Activated naive CD4-positive, alpha-beta T cell treated with anti-CD3 and anti-CD28 coated beads for 36 hours (primary cell): ENCODE measurements at regions of chr11 and their contacts with region 1.

Region 1: DNA sequence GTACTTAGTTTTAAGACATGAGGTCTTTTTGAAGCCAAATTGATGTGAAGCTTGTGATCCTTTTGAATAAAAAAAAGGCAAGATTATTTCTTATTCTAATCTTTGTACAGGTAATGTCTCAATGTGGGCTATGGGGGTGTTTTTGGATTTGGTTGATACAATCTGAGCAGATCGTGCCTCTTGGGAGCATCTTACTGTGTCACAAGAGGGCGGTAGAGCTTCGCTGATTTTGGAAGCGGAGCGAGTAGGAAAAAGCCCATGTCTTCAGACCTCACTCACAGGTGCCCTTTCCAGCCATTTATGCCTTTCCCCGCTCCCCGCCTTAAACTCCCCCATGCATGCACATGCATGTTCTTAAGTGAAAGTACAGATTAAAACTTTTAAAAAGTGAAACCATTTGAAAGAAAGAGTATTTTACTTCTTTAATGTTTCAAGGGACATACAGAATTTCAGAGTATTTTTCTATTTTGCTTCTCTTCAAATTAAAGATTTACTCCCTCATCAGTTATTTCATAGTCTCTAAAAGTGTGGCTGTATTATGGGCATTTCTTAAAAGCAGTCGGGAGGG is 18.8 kb downstream of the DDX25 start:
- DNase-seq: peak; percentile 75
- H3K4me3 Mint-ChIP-seq: no peak overlapping the region
- H3K27ac Mint-ChIP-seq: no peak overlapping the region
- H3K4me1 Mint-ChIP-seq: no peaks in the 10 kb centered on the region
- H3K27me3 Mint-ChIP-seq: peaks cover 9% of the 10 kb centered on the region

Region 2: GRCh38 chr11:125720781-125721180 is 202.3 kb before region 1 on chr11:
- CTCF ChIA-PET with region 1: no interaction called
- intact Hi-C with region 1: no loop called
- DNase-seq: no peak
- H3K4me3 Mint-ChIP-seq: no peak overlapping the region
- H3K27ac Mint-ChIP-seq: no peak overlapping the region
- H3K4me1 Mint-ChIP-seq: no peaks in the 10 kb centered on the region
- H3K27me3 Mint-ChIP-seq: peaks cover 8% of the 10 kb centered on the region

Region 3: DNA sequence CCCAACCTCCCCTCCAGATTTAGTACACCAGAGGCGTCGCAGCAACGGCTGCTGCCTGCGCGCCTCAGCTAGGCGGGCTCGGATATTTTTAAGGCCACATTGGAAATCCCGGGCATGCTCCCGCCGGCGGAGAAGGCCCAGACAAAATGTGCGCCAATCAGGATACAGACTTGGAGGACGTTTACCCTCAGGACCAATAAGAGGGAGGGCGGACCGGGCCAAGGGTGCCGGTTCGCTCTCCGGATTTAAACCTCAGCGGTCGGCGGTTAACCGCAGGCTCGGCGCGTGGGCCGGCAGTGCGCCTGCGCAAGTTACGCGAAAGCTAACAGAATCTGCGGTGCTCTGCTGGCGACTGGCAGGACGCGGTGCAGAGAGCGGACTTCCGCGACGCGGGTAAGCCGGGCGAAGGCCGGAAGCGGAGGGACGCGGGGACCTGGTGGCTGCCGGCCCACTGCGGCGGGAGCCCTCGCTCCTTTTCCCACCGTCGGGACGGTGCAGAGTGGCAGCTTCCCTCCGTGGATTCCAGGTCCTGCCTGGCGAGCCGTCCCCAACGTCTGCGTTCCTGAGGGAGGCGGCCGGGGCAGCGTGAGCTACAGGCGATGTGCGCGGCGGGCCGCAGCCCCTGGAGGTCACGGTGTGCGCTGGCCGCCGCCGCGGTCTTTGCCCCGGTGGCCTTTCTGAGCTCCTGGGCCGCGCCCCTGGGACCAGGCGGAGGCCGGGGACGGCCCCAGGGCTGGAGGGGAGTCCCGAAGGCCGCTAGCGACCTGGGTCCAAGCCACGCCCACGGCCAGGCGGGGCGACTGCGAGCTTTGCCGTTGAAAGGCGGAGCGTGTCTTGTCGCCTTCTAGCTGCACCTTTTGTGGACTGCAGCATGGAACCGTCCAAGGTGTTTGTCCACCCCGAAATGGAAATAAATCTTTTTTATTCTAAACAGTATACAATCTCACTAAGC is 35.4 kb before region 1 on chr11 and contains the start of gene HYLS1:
- CTCF ChIA-PET with region 1: no interaction called
- intact Hi-C with region 1: no loop called
- DNase-seq: peak; percentile 97
- H3K4me3 Mint-ChIP-seq: peak within 1 kb of the TSS; percentile 81
- H3K27ac Mint-ChIP-seq: peak within 1 kb of the TSS; percentile 88
- H3K4me1 Mint-ChIP-seq: peaks cover 35% of the 10 kb centered on the region
- H3K27me3 Mint-ChIP-seq: no peaks in the 10 kb centered on the region
- total RNA-seq, gene HYLS1: 10.2 to 11.7 TPM

Region 4: DNA sequence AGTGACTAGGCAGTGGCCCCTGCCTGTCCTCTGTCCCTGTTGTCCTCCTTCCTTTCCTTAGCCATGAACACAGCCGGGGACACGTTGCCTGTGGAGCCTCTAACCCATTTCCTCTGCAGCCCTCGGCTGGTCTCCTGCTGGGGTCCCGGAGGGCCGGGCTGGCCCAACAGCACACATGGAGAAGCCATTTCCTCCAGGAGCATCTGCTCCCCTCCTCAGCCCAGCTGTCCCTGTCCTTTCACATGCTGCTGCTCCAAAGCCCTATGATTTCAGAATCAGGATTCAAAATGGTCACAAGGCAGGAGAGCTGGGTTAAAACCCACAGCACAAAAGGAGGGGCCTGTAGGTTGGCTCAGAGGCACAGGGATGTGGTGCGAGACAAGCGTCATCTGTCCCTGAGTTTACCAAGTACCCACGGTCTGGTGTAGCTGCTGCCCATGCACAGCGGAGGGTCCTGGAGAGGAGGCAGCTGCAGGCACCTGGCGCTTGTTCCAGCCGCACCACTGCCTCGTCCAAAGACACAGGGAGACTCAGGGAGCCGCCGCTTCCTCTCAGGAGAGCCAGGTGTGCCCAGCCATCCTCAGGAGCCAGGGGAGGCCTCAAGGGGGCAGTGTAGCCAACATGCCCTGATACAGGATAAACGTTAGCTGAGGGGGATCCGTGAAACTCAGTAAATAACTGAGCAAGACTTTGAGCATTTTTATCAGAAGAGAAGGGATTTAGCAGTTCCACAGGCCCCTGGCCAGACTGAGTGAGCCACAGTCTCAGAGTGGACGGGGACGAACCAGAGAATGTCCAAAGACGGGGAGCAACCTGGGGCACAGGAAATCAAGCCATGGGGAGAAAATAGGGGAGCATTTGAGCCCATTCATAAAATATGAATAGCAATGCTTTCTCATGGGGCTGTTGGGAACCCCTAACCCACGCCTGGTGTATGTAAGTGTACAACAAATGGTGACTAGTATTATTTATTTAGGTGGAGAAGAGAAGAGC is 18.8 kb after region 1 on chr11:
- CTCF ChIA-PET with region 1: interaction called, 9 read pairs
- intact Hi-C with region 1: loop called (anchors 1 kb)
- DNase-seq: peak; percentile 79
- H3K4me3 Mint-ChIP-seq: no peak overlapping the region
- H3K27ac Mint-ChIP-seq: no peak overlapping the region
- H3K4me1 Mint-ChIP-seq: peaks cover 15% of the 10 kb centered on the region
- H3K27me3 Mint-ChIP-seq: no peaks in the 10 kb centered on the region

Region 5: DNA sequence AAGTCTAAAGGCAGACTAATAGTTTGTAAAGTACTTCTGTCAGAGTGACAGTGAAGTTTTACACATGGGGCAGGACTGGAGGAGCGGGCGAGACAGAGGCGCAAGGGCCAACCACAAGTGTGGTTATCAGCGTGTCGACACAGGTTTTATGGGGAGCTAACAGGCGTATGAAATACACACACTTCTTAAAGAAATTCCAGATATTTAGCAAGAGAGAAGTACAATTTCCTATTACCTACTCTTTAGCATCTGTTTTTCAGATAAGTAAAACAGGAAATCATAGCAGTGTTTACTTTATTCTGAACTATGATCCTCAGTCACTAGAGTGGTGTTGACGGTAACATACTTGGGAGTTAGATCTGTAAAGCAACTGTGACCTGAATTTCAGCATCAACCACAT is 45.3 kb after region 1 on chr11:
- CTCF ChIA-PET with region 1: no interaction called
- intact Hi-C with region 1: no loop called
- DNase-seq: no peak
- H3K4me3 Mint-ChIP-seq: no peak overlapping the region
- H3K27ac Mint-ChIP-seq: no peak overlapping the region
- H3K4me1 Mint-ChIP-seq: no peaks in the 10 kb centered on the region
- H3K27me3 Mint-ChIP-seq: no peaks in the 10 kb centered on the region

Region 6: GRCh38 chr11:126122863-126123262 is 199.8 kb after region 1 on chr11:
- CTCF ChIA-PET with region 1: interaction called, 3 read pairs
- intact Hi-C with region 1: loop called (anchors 5 kb)
- DNase-seq: no peak
- H3K4me3 Mint-ChIP-seq: no peak overlapping the region
- H3K27ac Mint-ChIP-seq: no peak overlapping the region
- H3K4me1 Mint-ChIP-seq: no peaks in the 10 kb centered on the region
- H3K27me3 Mint-ChIP-seq: no peaks in the 10 kb centered on the region

Region 7: DNA sequence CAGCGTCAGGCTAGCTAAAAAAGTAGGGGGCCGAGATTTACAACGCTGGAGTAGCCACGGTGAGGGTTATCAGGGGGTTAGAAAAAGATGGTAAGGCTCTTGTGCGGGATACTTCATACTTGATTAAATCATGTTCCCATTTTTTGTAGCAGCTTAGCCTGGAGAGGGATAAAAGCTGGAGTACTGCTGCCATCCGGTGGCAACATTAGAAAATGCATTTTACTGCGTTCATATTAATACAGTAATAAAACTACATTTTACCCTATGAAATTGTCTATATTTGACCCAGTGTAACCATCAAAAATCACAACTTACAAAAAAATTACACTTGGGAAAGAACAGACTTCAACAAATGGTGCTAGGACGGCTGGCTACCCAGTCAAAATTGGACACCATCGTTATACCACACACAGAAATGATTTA is 271.0 kb after region 1 on chr11:
- CTCF ChIA-PET with region 1: interaction called, 13 read pairs
- intact Hi-C with region 1: loop called (anchors 1 kb)
- DNase-seq: peak; percentile 63
- H3K4me3 Mint-ChIP-seq: no peak overlapping the region
- H3K27ac Mint-ChIP-seq: no peak overlapping the region
- H3K4me1 Mint-ChIP-seq: no peaks in the 10 kb centered on the region
- H3K27me3 Mint-ChIP-seq: no peaks in the 10 kb centered on the region

Region 8: DNA sequence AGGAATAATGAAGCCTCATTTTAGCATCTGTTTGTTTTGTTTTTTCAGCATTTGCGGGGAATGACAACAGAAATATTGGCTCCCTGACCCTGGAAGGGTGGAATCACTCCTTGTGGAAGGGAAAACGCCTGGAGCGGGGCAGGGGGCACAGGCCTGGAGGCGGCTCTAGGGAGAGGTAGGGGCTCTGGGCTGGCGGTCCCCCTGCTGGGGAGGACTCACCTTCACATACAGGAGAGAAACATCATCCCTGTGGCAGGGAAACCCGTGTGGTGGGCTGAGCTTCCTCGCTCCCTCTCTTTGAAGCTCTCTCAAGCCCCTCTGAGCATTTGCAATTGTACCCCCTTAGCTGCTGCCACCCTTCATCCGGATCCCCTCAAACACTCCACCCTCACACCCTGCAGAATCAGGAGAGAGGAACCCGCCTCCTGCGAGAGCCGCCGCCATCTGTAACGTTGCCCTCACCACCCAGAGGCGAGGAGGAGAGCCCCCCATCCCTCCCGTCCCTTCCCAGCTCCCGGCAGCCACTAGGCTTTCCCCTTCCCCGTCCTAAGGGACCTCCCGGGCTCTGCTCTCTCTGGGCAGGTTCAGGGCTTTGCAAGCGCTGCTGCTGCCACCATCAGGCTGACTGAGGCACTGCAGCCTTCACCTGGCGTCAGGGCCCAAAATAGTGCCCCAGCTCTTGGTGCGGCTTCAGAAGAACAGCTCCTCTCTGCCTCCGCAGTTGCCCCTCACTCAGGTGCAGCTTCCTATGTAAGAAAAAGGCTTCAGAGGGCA is 1067.0 kb after region 1 on chr11:
- CTCF ChIA-PET with region 1: no interaction called
- intact Hi-C with region 1: loop called (anchors 1 kb)
- DNase-seq: peak; percentile 67
- H3K4me3 Mint-ChIP-seq: no peak overlapping the region
- H3K27ac Mint-ChIP-seq: no peak overlapping the region
- H3K4me1 Mint-ChIP-seq: no peaks in the 10 kb centered on the region
- H3K27me3 Mint-ChIP-seq: peaks cover 14% of the 10 kb centered on the region